Transverse colon (tissue), 4 donors: ENCODE measurements at regions of chr13 and their contacts with region 1.

Region 1: GRCh38 chr13:28718543-28719226 is at the start of gene SLC46A3:
- DNase-seq: peak; percentile 99
- H3K4me3 ChIP-seq: peak within 1 kb of the TSS; percentile 41 to 88 (median 63)
- H3K27ac ChIP-seq: peak within 1 kb of the TSS; percentile 92 to 98 (median 92)
- H3K4me1 ChIP-seq: peaks cover 0 to 31% (median 18%) of the 10 kb centered on the region in 4 donors
- H3K27me3 ChIP-seq: no peaks in the 10 kb centered on the region
- CTCF ChIP-seq: peak in 2 of 5 experiments; percentile 14 to 44
- EP300 ChIP-seq: no peak
- POLR2A ChIP-seq: peak; percentile 88
- total RNA-seq, gene SLC46A3: 6.4 to 65.8 (median 46.5) TPM

Region 2: DNA sequence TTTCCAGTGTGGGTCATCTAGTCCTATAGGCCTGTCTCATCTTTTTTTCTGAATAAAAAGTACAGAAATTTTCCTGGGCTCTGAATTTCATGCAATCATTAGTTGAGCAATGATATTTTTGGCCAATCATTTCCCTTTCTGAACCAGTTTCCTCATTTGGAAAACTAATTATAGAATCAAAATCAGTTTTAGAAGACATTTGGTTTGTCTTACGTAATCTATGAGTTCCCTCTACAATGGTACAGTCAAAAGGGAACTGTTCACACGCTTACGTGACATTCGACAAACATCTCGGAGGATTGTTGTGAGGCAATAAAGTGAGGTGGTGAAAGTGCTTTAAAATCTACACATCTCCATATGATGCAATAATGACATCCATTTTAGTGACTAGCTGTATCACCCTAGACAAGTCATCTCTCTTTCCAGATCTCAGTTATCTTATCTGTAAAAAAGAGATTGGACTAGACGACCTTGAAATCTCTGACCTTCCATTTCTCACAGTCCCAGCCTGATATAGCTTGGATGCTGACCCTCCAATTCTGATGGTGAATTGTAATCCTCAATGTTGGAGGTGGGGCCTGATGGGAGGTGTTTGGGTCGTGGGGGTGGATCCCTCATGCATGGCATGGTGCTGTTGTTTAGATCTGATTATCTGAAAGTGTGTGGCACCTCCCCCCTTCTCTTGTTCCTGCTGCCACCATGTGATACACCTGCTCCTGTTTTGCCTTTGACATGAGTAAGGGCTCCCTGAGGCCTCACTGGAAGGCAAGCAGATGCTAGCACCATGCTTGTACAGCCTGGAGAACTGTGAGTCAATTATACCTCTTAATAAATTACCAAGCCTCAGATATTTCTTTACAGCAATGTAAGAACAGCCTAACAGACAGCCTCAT is 250.4 kb before region 1 on chr13:
- in situ Hi-C with region 1: no loop called
- intact Hi-C with region 1: no loop called
- DNase-seq: no peak
- H3K4me3 ChIP-seq: no peak overlapping the region
- H3K27ac ChIP-seq: no peak overlapping the region
- H3K4me1 ChIP-seq: peaks cover 0 to 9% (median 0%) of the 10 kb centered on the region in 4 donors
- H3K27me3 ChIP-seq: no peaks in the 10 kb centered on the region
- CTCF ChIP-seq: no peak
- EP300 ChIP-seq: no peak
- POLR2A ChIP-seq: no peak

Region 3: DNA sequence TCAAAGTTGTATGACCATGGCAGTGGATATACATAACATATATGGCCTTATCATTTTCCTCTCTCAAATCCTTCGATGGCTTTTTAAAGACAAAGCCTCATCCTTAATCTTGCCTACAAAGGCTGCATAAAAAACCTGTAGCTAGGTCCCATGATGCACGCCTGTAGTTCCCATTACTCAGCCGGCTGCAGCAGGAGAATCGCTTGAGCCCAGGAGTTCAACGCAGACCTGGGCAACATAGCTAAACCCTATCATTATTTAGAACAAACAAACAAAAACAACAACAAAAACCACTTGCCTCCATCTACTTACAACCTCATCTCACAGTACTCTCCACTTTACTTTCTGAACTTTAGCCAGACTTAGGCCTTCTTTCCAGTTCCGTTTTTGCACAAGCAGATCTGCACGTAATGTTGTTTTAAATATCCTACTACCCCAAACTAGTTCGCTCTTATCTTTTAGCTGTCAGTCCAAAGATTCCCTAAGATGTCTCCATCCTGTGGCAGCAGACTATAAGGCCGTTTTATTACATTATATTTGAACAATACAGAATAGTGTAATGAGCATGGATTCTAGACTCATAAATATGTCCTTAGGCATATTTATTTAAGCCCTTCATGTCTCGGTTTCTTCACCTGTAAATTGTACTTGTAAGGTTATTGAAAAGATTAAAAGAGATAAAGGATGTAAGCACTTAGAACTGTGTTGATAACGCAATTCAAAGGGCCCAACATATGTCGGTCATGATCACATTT is 60.7 kb before region 1 on chr13:
- in situ Hi-C with region 1: no loop called
- intact Hi-C with region 1: loop called (anchors 2 kb)
- DNase-seq: no peak
- H3K4me3 ChIP-seq: peak overlapping the region; percentile 73 to 91 (median 81)
- H3K27ac ChIP-seq: peak overlapping the region; percentile 88 to 93 (median 92)
- H3K4me1 ChIP-seq: peaks cover 22 to 45% (median 28%) of the 10 kb centered on the region in 4 donors
- H3K27me3 ChIP-seq: no peaks in the 10 kb centered on the region
- CTCF ChIP-seq: no peak
- EP300 ChIP-seq: no peak
- POLR2A ChIP-seq: no peak